Adrenal gland (tissue), 19 donors: ENCODE measurements at regions of chr2 and their contacts with region 1.

Region 1: DNA sequence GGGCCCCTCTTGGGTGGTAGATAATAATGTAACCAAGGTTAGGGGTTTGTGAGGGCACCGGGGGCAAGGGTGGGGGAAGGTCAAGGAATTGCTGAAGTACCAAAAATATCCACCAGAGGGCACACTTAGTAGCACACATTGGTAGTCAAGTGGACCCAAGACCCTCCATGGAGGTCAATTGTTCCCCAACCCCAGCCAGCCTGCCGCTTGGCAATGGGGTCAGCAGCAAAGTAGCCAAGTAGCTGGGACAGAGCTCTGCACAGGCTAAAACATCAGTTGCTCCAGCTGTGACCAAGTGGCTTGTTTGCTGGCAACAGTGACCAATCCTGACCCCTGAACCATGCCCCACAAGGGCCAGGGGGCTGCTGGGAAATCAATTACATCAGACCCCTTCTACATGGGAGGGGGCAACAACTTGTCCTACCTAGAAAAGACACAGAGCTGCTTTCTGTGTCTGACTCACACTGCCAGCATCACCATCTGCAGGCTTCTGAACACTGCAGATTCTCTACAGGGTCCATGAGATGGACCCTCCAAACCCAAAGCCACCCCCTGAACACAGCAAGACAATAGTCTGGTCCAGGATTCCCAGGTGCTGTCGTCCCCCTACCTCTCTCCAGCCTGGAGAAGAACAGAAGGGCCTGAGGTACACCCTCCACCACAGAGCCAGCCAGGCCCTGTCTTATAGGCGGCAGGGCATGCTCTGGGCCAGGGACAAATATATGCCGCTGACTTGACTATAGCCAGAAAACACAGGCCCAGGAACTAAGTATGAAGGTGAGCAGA is 76.0 kb downstream of the EMX1 start:
- DNase-seq: peak in 3 of 7 donors; percentile 25 to 54 (median 38)
- H3K4me3 ChIP-seq: no peak overlapping the region
- H3K27ac ChIP-seq: no peak overlapping the region
- H3K4me1 ChIP-seq: no peaks in the 10 kb centered on the region
- H3K27me3 ChIP-seq: no peaks in the 10 kb centered on the region
- CTCF ChIP-seq: peak; percentile 65 to 82 (median 72)
- POLR2A ChIP-seq: no peak

Region 2: GRCh38 chr2:71813807-71814470 is 1179.4 kb before region 1 on chr2:
- intact Hi-C with region 1: no loop called
- DNase-seq: peak in 1 of 7 donors; percentile 46
- H3K4me3 ChIP-seq: no peak overlapping the region
- H3K27ac ChIP-seq: no peak overlapping the region
- H3K4me1 ChIP-seq: no peaks in the 10 kb centered on the region
- H3K27me3 ChIP-seq: no peaks in the 10 kb centered on the region
- CTCF ChIP-seq: no peak
- POLR2A ChIP-seq: no peak

Region 3: DNA sequence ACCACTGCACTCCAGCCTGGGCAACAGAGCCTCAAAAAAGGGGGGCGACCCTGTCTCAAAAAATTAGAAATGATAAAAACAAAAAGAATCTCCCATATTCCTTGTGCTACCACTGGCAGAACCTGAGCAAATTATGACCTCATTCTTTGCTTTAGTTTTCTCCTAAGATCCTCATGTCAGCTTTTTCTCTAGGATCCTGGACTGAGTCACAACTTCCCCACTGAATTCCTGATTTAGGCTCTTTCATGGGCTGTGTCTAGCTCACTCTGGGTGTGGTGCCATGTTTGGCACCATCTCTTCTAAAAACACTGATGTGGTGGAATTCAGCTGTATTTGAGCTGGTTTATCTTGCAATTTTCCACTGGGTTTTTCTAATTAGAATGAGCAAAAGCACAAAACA is 204.6 kb before region 1 on chr2:
- intact Hi-C with region 1: no loop called
- DNase-seq: no peak
- H3K4me3 ChIP-seq: no peak overlapping the region
- H3K27ac ChIP-seq: no peak overlapping the region
- H3K4me1 ChIP-seq: peaks cover 0 to 14% of the 10 kb centered on the region in 2 donors
- H3K27me3 ChIP-seq: no peaks in the 10 kb centered on the region
- CTCF ChIP-seq: no peak
- POLR2A ChIP-seq: no peak

Region 4: GRCh38 chr2:73035899-73036711 is 42.8 kb after region 1 on chr2:
- intact Hi-C with region 1: no loop called
- DNase-seq: no peak
- H3K4me3 ChIP-seq: no peak overlapping the region
- H3K27ac ChIP-seq: no peak overlapping the region
- H3K4me1 ChIP-seq: no peaks in the 10 kb centered on the region
- H3K27me3 ChIP-seq: no peaks in the 10 kb centered on the region
- CTCF ChIP-seq: no peak
- POLR2A ChIP-seq: no peak

Region 5: DNA sequence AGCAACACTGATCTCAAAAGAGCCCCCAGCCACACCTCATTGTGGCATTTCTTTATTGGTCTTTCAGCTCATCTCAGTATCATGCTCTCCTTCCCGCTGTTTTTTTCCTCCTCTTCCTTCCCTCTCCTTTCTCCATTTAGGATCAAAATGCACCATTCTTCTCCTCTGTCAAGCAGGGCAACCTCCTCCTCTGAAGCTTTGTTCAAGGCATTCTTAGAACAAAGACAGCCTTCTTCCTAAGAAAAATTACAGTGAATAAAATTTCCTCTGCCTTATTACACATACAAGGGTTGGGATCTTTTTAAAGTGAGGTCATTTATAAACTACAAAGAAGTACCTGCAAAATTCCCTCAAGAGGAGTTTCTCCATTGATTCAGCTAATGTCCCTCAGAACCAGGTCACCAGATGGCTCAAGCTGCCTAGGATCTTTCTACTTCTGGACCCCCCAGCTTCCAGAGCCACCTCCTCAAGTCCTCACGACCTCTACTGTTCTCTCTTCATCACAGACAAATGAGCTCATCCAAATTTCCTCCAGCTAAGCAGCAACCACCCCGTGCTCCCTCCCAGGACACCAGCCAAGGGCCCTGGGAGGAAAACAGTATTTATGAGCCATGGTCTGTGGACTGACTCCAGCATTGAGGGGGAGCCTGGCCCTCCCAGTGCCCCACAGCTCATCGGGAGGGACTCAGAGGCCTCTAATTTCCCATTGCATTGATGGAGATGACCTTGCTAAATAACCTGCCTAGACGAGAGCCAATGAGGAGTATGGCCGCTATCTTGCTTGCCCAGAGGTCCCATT is 60.2 kb after region 1 on chr2:
- intact Hi-C with region 1: loop called in 1 of 2 experiments (anchors 10 kb)
- DNase-seq: no peak
- H3K4me3 ChIP-seq: no peak overlapping the region
- H3K27ac ChIP-seq: peak overlapping the region in 1 of 5 donors; percentile 7
- H3K4me1 ChIP-seq: no peaks in the 10 kb centered on the region
- H3K27me3 ChIP-seq: no peaks in the 10 kb centered on the region
- CTCF ChIP-seq: no peak
- POLR2A ChIP-seq: no peak

Region 6: DNA sequence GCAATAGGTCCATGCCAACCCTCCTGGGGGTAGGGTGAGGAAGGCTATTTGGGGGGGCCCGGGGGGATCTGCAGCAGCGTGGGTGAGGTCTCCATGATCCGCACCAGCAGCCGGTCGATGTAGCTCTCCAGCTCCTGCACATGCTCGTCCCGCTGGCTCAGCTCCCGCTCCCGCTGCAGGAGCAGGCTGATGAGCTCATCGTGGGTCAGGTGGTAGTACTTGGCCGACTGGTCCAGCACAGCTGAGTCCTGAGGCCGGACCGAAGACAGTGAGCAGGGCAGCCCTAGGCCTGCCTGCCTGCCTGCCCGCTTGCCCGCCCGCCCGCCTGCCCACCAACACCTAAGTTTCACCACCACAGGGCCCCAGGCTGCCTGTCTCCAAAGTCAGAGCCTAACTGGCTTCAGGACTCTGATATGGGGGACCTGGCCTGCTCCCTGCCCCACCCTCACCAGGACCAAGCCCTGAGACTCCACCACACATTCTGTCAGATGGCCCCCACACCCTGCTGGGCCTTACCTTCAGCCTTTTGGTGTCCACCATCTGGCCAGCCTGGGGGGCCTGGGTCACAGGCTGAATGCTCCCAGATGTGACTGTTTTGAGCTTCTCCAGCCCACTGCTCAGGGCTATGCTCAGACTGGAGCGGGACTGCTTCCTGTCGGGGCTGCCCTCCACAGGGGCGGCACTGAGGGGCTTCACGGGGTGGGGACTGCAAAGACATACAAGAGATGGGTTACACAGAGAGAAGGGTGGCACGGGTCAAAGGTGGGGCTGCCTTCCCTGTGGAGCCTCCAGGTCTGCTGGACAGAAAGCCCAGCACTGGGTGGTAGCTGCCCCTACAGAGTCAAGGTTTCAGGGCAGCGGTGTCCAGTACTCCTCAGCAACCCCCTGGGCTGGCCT is 82.4 kb after region 1 on chr2:
- intact Hi-C with region 1: loop called in 1 of 2 experiments (anchors 5 kb)
- DNase-seq: peak in 6 of 7 donors; percentile 44 to 78 (median 67)
- H3K4me3 ChIP-seq: no peak overlapping the region
- H3K27ac ChIP-seq: no peak overlapping the region
- H3K4me1 ChIP-seq: peaks cover 8% of the 10 kb centered on the region in 2 donors
- H3K27me3 ChIP-seq: no peaks in the 10 kb centered on the region
- CTCF ChIP-seq: no peak
- POLR2A ChIP-seq: no peak

Region 7: DNA sequence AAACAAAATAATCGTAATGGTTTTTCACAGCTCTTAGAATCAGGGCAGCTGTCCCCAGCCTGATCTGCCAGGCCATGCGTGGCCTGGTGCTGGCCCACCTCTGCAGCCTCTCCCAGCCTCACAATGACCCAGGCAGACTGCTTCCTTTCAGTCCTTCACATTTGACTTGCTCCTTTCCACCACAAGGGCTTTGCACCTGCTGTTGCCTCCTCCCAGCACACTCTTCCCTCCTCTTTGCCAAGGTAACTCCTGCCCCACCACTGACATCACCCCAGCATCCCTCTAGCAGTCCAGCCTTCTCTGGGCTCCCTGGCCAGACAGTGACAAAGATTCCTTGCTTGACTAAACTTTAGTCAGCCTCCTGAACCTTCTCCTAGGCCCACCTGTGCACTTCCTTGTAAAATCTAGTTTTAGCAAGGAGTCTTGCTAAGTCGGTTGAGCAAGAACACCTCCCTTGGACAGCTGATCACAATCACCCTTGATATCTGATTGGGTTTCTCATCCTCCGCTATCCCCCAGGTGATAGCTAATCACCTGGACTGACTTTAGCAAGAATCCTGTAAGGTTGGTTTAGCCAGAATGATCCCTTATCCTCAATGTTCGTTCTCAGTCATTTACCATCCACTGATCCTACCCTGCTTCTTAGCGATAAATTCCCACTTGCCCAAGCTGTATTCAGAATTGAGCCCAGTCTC is 135.6 kb after region 1 on chr2:
- intact Hi-C with region 1: no loop called
- DNase-seq: no peak
- H3K4me3 ChIP-seq: no peak overlapping the region
- H3K27ac ChIP-seq: no peak overlapping the region
- H3K4me1 ChIP-seq: peaks cover 4 to 6% of the 10 kb centered on the region in 2 donors
- H3K27me3 ChIP-seq: no peaks in the 10 kb centered on the region
- CTCF ChIP-seq: no peak
- POLR2A ChIP-seq: no peak

Region 8: DNA sequence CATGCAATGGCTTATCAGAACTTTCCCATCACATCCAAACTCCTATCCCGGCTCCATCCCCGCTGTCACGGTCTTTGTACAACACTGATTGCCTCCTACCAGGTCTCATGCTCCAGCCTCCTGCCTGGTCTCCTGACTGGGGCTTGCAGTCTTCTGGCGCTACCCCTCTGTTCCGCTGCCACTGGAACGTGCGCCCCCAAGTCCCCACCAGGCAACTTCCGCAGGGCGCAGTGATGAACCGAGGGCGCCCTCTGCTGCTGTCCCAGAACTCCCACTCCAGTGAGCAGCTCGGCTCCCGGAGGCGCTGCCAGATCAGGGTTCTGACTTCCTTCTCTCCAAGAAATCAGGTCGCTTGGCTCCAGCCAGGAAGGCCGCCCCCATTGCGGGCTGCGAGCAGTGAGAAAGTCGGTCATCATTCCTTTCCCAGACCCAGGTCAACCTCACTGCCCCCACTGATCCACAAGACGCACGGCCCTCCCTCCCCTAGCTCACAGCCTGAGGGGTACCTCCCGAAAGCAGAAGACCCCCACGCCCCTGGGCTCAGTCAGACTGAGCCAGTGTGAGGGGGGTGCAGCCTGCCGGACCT is 163.3 kb after region 1 on chr2:
- intact Hi-C with region 1: loop called in 1 of 2 experiments (anchors 5 kb)
- DNase-seq: peak; percentile 61 to 79 (median 76)
- H3K4me3 ChIP-seq: no peak overlapping the region
- H3K27ac ChIP-seq: no peak overlapping the region
- H3K4me1 ChIP-seq: peaks cover 0 to 7% of the 10 kb centered on the region in 2 donors
- H3K27me3 ChIP-seq: peaks cover 5% of the 10 kb centered on the region
- CTCF ChIP-seq: peak; percentile 57 to 81 (median 74)
- POLR2A ChIP-seq: no peak

Region 9: DNA sequence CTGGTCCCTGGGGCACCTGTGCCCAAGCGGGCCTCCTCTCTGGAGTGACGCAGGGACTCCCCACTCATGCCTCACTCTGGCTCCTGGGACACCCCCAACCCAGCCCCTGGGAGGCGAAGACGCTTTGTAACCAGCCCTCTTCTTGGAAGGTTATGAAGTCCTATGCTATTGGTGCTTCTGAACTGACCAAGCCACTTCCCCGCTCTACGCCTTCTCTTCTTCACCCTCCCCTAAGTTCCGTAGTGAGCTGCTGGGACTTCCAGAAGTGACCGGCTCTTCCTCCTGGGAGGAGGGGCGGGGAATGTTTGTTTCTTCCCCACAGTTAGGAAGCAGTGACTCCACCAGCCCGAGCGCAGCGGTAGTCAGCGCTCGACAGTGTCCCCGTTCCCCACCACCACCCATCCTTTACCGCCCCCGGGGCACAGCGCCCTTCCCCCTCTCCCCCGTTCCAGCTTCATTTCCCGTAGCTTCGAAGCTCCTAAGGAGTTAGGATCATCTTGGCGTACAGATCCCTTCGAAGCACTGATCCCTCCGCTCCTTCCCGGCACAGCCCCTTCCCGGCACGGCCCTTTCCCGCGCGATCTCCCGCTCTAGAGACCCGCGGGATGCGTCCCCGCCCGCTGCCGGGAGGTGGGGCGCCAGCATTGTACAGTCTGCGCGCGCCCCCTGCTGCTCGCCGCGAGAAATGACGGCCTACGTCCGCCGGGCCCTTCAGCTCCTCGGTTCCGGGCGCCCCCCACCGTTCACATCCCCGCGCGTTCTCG is 183.7 kb after region 1 on chr2:
- intact Hi-C with region 1: loop called (anchors 5 to 10 kb)
- DNase-seq: peak; percentile 85 to 95 (median 89)
- H3K4me3 ChIP-seq: peak overlapping the region in 3 of 4 donors; percentile 23 to 61 (median 41)
- H3K27ac ChIP-seq: peak overlapping the region in 2 of 5 donors; percentile 50 to 79
- H3K4me1 ChIP-seq: peaks cover 17 to 18% of the 10 kb centered on the region in 2 donors
- H3K27me3 ChIP-seq: peaks cover 3% of the 10 kb centered on the region
- CTCF ChIP-seq: peak; percentile 95 to 98 (median 97)
- POLR2A ChIP-seq: no peak